ENCODE measurements at regions of chr4 and their contacts with region 1.

Region 1: DNA sequence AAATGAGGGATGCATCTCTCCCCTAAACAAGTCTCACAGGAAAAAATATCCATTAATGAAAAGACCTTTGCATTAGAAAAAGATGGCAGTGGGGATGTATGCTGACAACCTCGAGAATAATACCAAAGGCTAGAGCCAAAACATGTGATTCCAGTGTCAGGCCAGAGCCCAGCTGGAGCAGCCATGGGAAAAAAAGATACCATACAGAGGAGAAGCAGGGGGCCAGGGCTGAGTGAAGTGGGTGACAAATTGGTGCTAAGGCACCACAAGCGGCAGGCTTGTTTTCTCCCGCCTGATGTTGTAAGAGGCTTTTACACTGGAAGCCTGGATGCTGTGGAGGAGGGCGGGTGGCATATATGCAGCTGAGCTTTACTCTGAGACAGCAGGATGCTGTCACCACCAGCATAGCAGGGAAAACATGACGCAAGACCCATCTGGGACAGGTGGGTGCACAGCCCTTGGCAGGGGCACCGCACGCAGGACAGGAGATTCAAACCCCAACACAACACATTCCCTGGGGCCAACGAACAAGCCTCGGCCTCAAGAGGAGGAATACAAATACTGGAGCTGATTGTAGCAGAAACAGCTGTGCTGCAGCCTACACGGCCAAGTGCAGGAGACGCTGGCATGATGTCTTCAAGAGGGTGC is 91.9 kb downstream of the TSPAN5 start:
- DNase-seq: no peak
- H3K4me3 ChIP-seq: no peak overlapping the region
- H3K27me3 ChIP-seq: no peaks in the 10 kb centered on the region
- CTCF ChIP-seq: no peak

Region 2: DNA sequence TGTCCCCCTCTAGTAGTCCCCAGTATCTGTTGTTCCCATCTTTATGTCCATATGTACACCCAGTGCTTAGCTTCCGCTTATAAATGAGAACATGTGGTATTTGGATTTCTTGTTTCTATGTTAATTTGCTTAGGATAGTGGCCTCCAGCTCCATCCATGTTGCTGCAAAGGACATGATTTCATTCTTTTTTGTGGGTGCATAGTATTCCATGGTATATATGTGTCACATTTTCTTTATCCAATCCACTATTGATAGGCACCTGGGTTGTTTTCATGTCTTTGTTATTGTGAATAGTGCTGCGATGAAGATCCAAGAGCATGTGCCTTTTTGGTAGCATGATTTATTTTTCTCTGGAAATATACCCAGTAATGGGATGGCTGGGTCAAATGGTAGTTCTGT is 299.0 kb before region 1 on chr4:
- CTCF ChIA-PET with region 1: no interaction called
- POLR2A ChIA-PET with region 1: no interaction called
- DNase-seq: no peak
- H3K4me3 ChIP-seq: no peak overlapping the region
- H3K27me3 ChIP-seq: no peaks in the 10 kb centered on the region
- CTCF ChIP-seq: no peak

Region 3: GRCh38 chr4:99074816-99075215 is 508.3 kb after region 1 on chr4:
- CTCF ChIA-PET with region 1: no interaction called
- POLR2A ChIA-PET with region 1: interaction called, 17 read pairs
- DNase-seq: no peak
- H3K4me3 ChIP-seq: no peak overlapping the region
- H3K27me3 ChIP-seq: no peaks in the 10 kb centered on the region
- CTCF ChIP-seq: no peak